ENCODE measurements at regions of chr3 and their contacts with region 1.

Region 1: GRCh38 chr3:56238299-56238698 is 230.0 kb downstream of the ERC2 start:
- DNase-seq: no peak
- ATAC-seq: no peak
- H3K4me3 ChIP-seq: no peak overlapping the region
- H3K27ac ChIP-seq: no peak overlapping the region
- H3K4me1 ChIP-seq: no peaks in the 10 kb centered on the region
- H3K27me3 ChIP-seq: peaks cover 0 to 5% (median 0%) of the 10 kb centered on the region in 9 donors
- CTCF ChIP-seq: no peak
- POLR2A ChIP-seq: no peak

Region 2: GRCh38 chr3:55235416-55235815 is 1002.9 kb before region 1 on chr3:
- intact Hi-C with region 1: loop called in 1 of 10 experiments (anchors 5 kb)
- DNase-seq: no peak
- ATAC-seq: no peak
- H3K4me3 ChIP-seq: no peak overlapping the region
- H3K27ac ChIP-seq: no peak overlapping the region
- H3K4me1 ChIP-seq: no peaks in the 10 kb centered on the region
- H3K27me3 ChIP-seq: peaks cover 0 to 5% (median 0%) of the 10 kb centered on the region in 9 donors
- CTCF ChIP-seq: no peak
- POLR2A ChIP-seq: no peak

Region 3: DNA sequence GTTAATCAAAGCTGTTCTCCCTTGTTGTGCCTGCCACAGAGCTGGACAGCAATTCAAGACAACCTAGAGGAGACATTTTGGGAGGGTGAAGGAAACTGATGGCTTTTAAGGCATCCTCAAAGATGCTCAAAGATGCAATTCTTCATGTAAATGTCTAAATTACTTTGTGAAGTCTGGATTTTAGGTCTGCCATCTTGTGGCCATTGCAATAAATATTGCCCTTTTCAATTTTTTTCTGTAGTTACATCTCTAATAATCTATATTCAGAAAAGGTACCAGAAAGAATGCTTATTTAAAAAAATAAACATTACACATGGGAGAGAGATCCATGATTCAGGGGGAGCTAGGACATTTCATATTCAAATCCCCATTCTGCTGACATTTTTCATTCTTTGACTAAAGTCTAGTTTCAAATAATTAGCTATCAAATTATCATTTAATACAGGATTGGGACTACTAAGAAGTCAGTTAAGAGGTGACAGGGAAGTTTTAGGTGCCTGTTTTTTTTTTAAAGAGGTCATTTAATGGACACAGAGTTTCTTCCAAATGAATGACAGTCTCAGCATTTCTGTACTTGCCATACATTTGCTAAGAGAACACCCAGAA is 491.4 kb before region 1 on chr3:
- intact Hi-C with region 1: loop called in 1 of 10 experiments (anchors 10 kb)
- DNase-seq: no peak
- ATAC-seq: no peak
- H3K4me3 ChIP-seq: no peak overlapping the region
- H3K27ac ChIP-seq: no peak overlapping the region
- H3K4me1 ChIP-seq: no peaks in the 10 kb centered on the region
- H3K27me3 ChIP-seq: peaks cover 0 to 11% (median 0%) of the 10 kb centered on the region in 9 donors
- CTCF ChIP-seq: peak; percentile 14 to 50 (median 34)
- POLR2A ChIP-seq: no peak

Region 4: DNA sequence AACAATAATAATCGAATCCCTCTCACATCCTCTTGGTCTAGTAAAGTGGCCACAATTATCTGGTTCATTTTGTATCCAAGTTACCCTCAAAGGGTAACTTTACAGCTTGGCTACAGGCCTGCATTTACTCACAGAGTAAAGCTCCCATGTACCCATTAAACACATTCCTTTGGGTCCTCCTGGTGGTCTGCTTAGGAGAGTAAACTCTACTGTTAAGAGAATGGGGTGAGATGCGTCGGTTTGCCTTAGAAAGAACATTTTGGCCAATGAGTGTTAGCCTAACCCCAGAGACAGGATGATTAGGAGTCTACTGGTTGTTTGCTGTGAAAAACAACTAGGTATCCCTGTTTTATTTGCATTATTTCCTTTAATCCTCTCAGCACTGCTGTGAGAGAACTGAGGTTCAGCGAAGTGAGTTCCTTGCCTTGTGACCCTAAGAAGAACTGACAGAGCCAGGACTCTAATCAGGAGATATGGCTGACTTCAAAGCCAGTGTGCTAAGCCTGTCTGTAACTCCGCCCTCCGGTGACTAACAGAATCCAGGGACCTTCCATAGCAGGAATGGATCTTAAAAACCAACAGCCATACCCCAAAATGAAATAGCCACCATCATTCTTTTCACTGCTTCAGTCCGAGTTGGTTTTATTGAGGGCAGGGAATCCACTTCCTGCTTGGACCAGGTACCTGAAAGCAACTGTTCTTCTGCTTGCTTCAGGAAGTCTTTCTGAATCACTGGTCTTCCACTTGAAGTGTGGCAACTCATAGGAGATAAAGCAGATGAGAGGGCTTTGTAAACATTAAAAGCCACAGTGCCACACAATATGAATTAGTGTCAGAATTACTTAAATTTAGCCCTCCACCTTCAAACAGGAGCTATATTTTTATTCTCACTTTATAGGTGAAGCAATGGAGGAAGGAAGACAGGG is 433.9 kb before region 1 on chr3:
- intact Hi-C with region 1: no loop called
- DNase-seq: no peak
- ATAC-seq: no peak
- H3K4me3 ChIP-seq: no peak overlapping the region
- H3K27ac ChIP-seq: no peak overlapping the region
- H3K4me1 ChIP-seq: no peaks in the 10 kb centered on the region
- H3K27me3 ChIP-seq: no peaks in the 10 kb centered on the region
- CTCF ChIP-seq: no peak
- POLR2A ChIP-seq: no peak

Measured in heart left ventricle (tissue), 16 donors.